HEK293T (cell line): ENCODE measurements at regions of chr14 and their contacts with region 1.

Region 1: DNA sequence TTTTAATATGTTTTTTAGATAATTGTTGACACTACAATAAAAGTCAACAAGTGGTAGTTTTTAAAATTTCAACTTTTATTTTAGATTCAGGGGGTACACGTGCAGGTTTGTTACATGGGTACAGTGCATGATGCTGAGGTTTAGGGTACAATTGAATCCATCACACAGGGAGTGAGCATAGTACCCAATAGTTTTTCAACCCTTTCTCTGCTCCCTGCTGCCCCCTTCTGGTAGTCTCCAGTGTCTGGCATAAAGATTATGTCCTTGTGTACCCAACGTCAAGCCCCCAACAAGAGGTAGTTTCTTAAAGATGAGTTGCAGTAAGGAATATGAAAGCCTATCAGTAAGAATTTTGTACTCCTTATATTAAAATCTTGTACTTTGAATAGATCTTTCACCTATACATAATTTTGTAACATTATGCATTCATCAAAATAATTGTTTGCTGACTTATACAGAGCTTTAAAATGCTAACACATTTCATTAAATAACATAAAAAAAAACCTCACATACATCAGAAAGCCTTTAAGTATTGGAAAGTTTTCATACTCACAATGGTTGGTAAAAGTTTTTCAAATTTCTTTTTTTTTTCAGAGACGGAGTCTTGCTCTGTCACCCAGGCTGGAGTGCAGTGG is 5.4 kb upstream of the RALGAPA1 start:
- DNase-seq: peak; percentile 36

Region 2: DNA sequence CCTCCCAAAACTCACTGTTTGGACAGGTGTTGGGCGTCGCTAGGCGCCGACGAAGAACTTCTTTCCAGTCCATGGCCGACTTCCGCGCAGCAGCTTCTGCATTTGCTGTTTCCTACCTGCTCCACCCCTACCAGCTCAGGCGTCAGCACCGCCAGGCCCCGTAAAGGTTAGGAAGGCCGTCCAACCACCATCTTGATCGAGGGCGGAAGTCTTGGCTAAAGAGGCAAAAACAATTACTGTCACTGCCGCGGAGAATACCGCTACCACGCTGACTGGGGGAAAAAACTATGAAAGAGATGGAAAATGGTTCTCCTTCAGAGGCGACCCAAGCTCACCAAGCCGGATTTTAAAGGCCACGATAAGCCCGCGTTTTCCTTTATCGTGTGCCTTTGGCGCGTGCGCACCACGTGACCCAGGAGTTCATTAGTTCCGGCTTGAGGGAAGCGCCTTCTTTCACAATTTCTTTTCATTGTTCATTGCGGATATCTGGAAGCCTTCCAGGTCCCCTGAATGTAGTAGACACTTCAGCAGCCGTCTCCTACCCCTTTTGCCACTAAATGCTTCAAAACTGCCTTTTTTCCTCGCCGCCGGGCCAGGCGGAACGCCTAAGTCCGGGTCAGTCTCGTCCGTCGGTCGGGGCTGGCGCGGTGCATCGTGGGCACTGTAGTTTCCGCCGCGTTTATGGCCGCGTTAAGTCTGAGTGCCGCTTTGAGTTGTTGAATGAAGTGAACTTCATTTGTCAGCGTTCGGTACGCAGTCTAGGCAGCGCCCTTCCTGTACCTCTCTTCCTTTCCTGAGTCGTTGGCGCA is 692.4 kb before region 1 on chr14 and contains the starts of genes PPP2R3C and PRORP:
- CTCF ChIA-PET with region 1: interaction called, 10 read pairs
- POLR2A ChIA-PET with region 1: no interaction called
- DNase-seq: peak; percentile 78

Region 3: DNA sequence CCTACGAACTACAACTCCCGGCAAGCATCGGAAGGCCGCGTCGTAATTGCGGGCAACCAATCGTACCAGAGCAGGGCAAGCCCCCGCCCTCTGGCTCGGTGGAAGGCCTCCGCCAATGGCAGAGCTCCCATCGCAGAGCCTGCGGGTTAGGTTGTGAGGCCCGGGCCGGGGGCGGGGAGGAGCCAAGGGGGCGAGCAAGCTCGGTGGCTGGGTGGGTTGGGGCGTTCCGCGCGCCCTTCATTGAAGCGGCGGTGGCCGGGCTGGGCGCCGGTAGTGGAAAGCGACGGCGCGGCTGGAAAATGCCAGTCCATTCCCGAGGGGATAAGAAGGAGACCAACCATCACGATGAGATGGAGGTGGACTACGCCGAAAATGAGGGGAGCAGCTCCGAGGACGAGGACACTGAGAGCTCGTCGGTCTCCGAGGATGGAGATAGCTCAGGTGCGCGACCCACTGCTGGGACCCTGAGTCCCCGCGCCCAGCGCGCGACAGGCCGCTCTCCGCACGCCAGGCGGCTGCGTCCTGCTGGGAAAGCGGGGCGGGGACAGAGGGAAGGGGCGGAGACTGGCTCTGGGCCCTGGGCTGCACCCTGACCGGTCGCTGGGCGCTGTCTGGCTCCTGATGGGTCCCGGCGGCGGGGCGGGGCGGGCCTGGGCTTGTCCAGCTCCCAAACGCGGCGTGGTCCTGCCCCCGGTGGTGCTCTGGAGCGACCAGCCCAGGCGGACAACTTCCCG is 11.9 kb after region 1 on chr14 and contains the start of gene BRMS1L:
- CTCF ChIA-PET with region 1: interaction called, 11 read pairs
- POLR2A ChIA-PET with region 1: interaction called, 12 read pairs
- DNase-seq: peak; percentile 94

Region 4: GRCh38 chr14:35883677-35884293 is 69.3 kb after region 1 on chr14:
- CTCF ChIA-PET with region 1: no interaction called
- POLR2A ChIA-PET with region 1: no interaction called
- DNase-seq: peak; percentile 23

Region 5: DNA sequence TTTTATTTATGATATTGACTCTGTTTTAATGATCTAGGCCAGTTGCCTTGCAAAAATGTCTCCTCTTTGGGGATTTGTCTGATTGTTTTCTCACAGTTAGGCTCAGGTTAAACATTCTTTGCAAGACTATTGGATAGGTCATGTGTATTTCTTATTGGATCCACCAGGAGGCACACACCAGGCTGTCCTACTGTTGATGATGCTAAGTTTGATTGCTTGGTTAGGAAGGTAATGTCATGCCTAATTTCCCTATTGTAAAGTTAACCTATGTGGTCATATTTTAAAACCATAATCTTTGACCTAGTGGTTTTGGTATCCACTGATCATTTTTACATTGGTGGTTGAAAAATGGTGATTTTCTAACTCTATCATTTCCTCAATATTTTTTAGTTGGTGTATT is 148.7 kb after region 1 on chr14:
- CTCF ChIA-PET with region 1: no interaction called
- POLR2A ChIA-PET with region 1: no interaction called
- DNase-seq: peak; percentile 25